Right cardiac atrium (tissue), 5 donors: ENCODE measurements at regions of chr10 and their contacts with region 1.

Region 1: DNA sequence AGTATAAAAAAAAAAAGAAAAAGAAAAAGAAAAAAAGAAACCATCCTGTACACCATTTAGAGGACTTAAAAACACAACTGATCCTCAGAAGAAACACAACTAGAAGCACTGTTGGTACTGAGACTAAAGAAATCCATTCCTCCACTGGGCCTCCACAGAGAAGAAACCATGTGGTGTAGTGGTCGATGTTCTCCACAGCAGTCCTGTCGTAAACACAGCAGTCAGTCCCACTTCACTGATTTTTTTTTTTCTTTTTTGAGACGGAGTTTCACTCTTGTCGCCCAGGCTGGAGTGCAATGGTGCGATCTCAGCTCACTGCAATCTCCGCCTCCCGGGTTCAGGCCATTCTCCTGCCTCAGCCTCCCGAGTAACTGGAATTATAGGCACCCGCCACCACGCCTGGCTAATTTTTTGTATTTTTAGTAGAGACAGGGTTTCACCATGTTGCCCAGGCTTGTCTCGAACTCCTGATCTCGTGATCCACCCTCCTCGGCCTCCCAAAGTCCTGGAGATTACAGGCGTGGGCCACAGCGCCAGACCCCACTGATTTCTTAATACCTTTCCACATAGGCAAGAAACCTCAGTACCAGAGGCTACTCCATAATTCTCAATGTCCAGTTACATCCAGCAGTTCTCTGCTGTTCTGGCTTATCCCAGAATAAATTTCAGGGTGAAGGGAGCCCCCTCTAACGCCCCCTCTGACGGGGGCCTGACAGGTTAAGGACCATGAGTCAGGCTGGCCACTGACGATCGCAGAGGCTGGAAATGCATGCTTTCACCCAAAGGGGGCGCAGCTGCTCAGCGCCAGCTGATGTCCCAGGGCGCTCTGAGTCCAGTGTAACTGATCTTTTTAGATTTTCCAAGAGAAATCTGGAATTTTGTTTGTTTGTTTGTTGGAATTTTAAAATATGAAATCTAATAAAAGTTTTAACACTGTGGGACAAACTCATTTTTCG is 24.8 kb upstream of the FFAR4 start:
- DNase-seq: peak; percentile 50 to 80 (median 74)
- ATAC-seq: peak; percentile 93 to 96
- H3K4me3 ChIP-seq: peak overlapping the region; percentile 44
- H3K27ac ChIP-seq: no peak overlapping the region
- H3K4me1 ChIP-seq: no peaks in the 10 kb centered on the region
- H3K27me3 ChIP-seq: no peaks in the 10 kb centered on the region

Region 2: GRCh38 chr10:93330824-93331223 is 210.9 kb before region 1 on chr10:
- intact Hi-C with region 1: no loop called
- DNase-seq: no peak
- ATAC-seq: no peak
- H3K4me3 ChIP-seq: no peak overlapping the region
- H3K27ac ChIP-seq: no peak overlapping the region
- H3K4me1 ChIP-seq: no peaks in the 10 kb centered on the region
- H3K27me3 ChIP-seq: no peaks in the 10 kb centered on the region

Region 3: GRCh38 chr10:93458821-93459257 is 82.8 kb before region 1 on chr10:
- intact Hi-C with region 1: no loop called
- DNase-seq: peak; percentile 65 to 83 (median 79)
- ATAC-seq: peak; percentile 93 to 94
- H3K4me3 ChIP-seq: no peak overlapping the region
- H3K27ac ChIP-seq: peak overlapping the region; percentile 79
- H3K4me1 ChIP-seq: no peaks in the 10 kb centered on the region
- H3K27me3 ChIP-seq: no peaks in the 10 kb centered on the region

Region 4: GRCh38 chr10:93639791-93640190 is 98.1 kb after region 1 on chr10:
- intact Hi-C with region 1: no loop called
- DNase-seq: no peak
- ATAC-seq: no peak
- H3K4me3 ChIP-seq: no peak overlapping the region
- H3K27ac ChIP-seq: no peak overlapping the region
- H3K4me1 ChIP-seq: no peaks in the 10 kb centered on the region
- H3K27me3 ChIP-seq: no peaks in the 10 kb centered on the region

Region 5: GRCh38 chr10:93680412-93681047 is 138.8 kb after region 1 on chr10:
- intact Hi-C with region 1: loop called in 1 of 4 experiments (anchors 5 kb)
- DNase-seq: no peak
- ATAC-seq: peak; percentile 39 to 60
- H3K4me3 ChIP-seq: no peak overlapping the region
- H3K27ac ChIP-seq: no peak overlapping the region
- H3K4me1 ChIP-seq: no peaks in the 10 kb centered on the region
- H3K27me3 ChIP-seq: no peaks in the 10 kb centered on the region

Region 6: DNA sequence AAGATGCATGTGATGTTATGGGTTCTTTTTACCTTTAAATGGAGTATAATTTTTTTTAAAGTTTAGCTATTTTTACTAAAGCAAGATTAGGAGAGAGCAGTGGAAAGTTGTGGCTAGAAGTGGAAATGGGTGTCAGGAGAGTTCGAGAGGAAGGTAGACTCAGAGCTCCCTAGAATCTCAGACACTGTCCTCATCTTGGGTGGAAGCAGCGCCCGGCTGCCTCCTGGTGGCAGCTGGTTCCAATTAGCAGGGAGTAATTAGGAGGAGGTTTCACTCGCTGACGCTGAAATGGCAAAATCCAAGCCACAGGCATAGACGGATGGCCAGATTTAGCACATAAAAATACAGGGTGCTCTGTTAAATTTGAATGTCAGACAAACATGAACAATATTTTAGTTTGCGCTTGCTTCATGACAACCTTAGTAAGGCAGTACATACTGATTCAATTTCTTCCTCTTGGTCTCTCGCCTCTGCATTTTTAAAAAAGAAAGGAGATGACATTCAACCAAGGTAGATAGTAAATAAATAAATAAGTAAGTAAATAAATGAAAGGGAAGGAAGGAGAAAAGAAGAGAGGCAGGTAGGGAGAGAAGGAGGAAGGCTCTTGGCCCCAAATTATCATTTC is 274.6 kb after region 1 on chr10:
- intact Hi-C with region 1: loop called in 1 of 4 experiments (anchors 10 kb)
- DNase-seq: peak; percentile 65 to 91 (median 86)
- ATAC-seq: peak; percentile 91 to 93
- H3K4me3 ChIP-seq: no peak overlapping the region
- H3K27ac ChIP-seq: no peak overlapping the region
- H3K4me1 ChIP-seq: no peaks in the 10 kb centered on the region
- H3K27me3 ChIP-seq: no peaks in the 10 kb centered on the region

Region 7: DNA sequence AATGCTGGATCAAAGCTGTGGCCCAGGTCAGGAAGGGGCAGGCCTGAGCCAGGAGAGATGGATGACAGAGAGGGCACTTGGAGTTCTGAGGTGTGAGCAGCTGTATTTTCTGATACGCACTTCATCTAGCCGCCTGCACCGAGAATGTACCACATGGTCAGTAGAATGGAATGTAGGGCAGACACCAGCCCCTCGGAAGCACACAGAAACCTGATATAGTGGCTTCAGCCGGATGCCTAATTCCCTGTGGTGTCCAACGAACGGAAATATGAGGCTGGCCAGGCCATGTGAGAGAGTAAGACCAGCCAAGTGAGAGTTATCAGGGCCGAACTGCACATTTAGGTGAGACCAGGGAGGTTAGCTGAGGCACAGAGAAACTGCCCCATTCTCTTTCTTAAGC is 405.4 kb after region 1 on chr10:
- intact Hi-C with region 1: no loop called
- DNase-seq: peak; percentile 37 to 76 (median 72)
- ATAC-seq: peak; percentile 92 to 95
- H3K4me3 ChIP-seq: no peak overlapping the region
- H3K27ac ChIP-seq: peak overlapping the region; percentile 98
- H3K4me1 ChIP-seq: peaks cover 10% of the 10 kb centered on the region
- H3K27me3 ChIP-seq: no peaks in the 10 kb centered on the region